Activated CD4-positive, alpha-beta memory T cell treated with anti-CD3 and anti-CD28 coated beads for 36 hours (primary cell): ENCODE measurements at regions of chr5 and their contacts with region 1.

Region 1: GRCh38 chr5:133364936-133365707 is 247.2 kb downstream of the FSTL4 start:
- DNase-seq: no peak
- H3K4me3 Mint-ChIP-seq: no peak overlapping the region
- H3K27ac Mint-ChIP-seq: no peak overlapping the region
- H3K4me1 Mint-ChIP-seq: no peaks in the 10 kb centered on the region
- H3K27me3 Mint-ChIP-seq: peaks cover 2% of the 10 kb centered on the region

Region 2: GRCh38 chr5:133273661-133274596 is 91.2 kb before region 1 on chr5:
- CTCF ChIA-PET with region 1: no interaction called
- POLR2A ChIA-PET with region 1: no interaction called
- intact Hi-C with region 1: no loop called
- DNase-seq: no peak
- H3K4me3 Mint-ChIP-seq: no peak overlapping the region
- H3K27ac Mint-ChIP-seq: no peak overlapping the region
- H3K4me1 Mint-ChIP-seq: no peaks in the 10 kb centered on the region
- H3K27me3 Mint-ChIP-seq: no peaks in the 10 kb centered on the region

Region 3: GRCh38 chr5:133460172-133460758 is 95.1 kb after region 1 on chr5:
- CTCF ChIA-PET with region 1: no interaction called
- POLR2A ChIA-PET with region 1: no interaction called
- intact Hi-C with region 1: loop called (anchors 10 kb)
- DNase-seq: peak; percentile 63
- H3K4me3 Mint-ChIP-seq: no peak overlapping the region
- H3K27ac Mint-ChIP-seq: no peak overlapping the region
- H3K4me1 Mint-ChIP-seq: peaks cover 7% of the 10 kb centered on the region
- H3K27me3 Mint-ChIP-seq: peaks cover 2% of the 10 kb centered on the region

Region 4: GRCh38 chr5:133489632-133490031 is 124.5 kb after region 1 on chr5:
- CTCF ChIA-PET with region 1: no interaction called
- POLR2A ChIA-PET with region 1: no interaction called
- intact Hi-C with region 1: no loop called
- DNase-seq: peak; percentile 49
- H3K4me3 Mint-ChIP-seq: no peak overlapping the region
- H3K27ac Mint-ChIP-seq: no peak overlapping the region
- H3K4me1 Mint-ChIP-seq: peaks cover 5% of the 10 kb centered on the region
- H3K27me3 Mint-ChIP-seq: no peaks in the 10 kb centered on the region

Region 5: DNA sequence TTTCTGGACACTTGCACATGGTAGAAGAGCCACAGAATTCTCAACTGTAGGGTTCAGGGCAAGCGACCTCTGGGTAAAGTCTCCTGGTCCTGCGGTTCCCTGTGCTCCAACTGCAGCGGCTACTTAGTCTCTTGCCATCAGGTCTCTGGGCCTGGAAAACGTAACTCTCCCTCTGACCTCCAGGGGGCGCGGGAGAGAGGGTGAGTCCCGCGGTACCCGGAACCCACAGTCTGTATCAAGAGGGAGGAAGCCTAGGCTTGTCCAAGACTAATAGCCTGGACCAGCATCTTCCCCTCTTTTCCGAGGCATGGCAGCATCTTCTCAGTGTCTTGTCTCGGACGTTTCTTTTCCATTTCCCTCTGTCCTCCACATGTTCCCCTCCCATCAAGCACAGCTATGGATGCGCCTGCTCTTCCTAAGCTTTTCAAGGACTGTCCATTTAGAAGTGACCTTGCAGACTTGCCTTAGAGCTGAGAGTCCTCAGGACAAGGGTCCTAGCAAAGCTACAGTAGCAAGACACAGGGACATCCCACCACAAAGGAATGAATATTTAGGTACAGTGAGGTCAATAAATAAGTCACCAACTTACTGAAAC is 187.9 kb after region 1 on chr5:
- CTCF ChIA-PET with region 1: no interaction called
- POLR2A ChIA-PET with region 1: no interaction called
- intact Hi-C with region 1: no loop called
- DNase-seq: peak; percentile 71
- H3K4me3 Mint-ChIP-seq: no peak overlapping the region
- H3K27ac Mint-ChIP-seq: no peak overlapping the region
- H3K4me1 Mint-ChIP-seq: no peaks in the 10 kb centered on the region
- H3K27me3 Mint-ChIP-seq: peaks cover 19% of the 10 kb centered on the region